ENCODE measurements at regions of chr3 and their contacts with region 1.

Region 1: GRCh38 chr3:47324278-47324865 is 41.6 kb downstream of the KLHL18 start:
- DNase-seq: peak; percentile 63
- ATAC-seq: peak; percentile 95
- H3K4me3 ChIP-seq: no peak overlapping the region
- H3K27ac ChIP-seq: no peak overlapping the region
- H3K4me1 ChIP-seq: no peaks in the 10 kb centered on the region
- H3K27me3 ChIP-seq: no peaks in the 10 kb centered on the region
- CTCF ChIP-seq: peak; percentile 82
- EP300 ChIP-seq: no peak
- POLR2A ChIP-seq: no peak
- RAD21 ChIP-seq: peak; percentile 73

Region 2: DNA sequence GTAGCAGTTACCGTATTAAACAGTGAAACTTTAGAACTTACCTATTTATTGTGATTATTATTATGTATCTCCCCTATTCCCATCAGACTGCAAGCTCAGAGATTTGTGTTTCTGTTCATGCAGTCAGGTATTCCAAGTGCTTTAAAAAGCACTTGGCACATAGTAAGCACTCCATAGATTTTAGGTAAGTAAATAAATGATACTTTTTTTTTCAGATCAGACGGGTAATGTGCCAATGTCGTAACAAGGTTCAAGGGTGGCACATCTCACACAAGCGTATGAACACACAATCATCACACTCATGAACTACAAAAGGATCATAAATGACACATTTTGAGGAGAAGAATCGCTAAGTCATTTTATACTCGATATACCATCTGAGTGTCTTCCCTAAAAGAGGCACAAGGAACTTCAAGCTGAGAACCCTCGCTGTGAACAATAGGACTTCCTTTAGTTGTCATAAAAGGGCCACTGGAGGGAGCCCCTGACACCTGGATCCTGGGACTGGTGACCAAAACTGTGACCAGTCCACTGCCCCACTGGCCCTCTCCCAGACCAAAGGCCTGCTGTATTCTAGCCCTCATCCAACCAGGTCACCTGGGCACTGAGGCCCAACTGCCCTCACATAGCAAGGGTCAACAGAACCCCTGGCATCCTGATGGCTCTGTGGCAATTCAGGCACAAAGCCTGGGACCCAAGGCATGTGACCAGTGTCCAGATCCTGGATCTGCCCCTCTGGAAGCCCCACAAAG is 73.9 kb before region 1 on chr3:
- CTCF ChIA-PET with region 1: interaction called, 14 read pairs
- POLR2A ChIA-PET with region 1: no interaction called
- in situ Hi-C with region 1: loop called (anchors 5 kb)
- intact Hi-C with region 1: loop called (anchors 1 kb)
- DNase-seq: peak; percentile 60
- ATAC-seq: peak; percentile 85
- H3K4me3 ChIP-seq: no peak overlapping the region; a peak in 1 of 6 replicates
- H3K27ac ChIP-seq: no peak overlapping the region
- H3K4me1 ChIP-seq: peaks cover 22% of the 10 kb centered on the region
- H3K27me3 ChIP-seq: no peaks in the 10 kb centered on the region; a peak in 1 of 5 replicates
- CTCF ChIP-seq: peak; percentile 82
- EP300 ChIP-seq: no peak
- POLR2A ChIP-seq: no peak
- RAD21 ChIP-seq: peak; percentile 65; the same call in 1 of the 2 replicates

Region 3: GRCh38 chr3:47282424-47283192 is 41.8 kb before region 1 on chr3 and contains the starts of genes KIF9 and KLHL18:
- CTCF ChIA-PET with region 1: interaction called, 12 read pairs
- POLR2A ChIA-PET with region 1: interaction called, 3 read pairs
- in situ Hi-C with region 1: loop called (anchors 5 kb)
- intact Hi-C with region 1: loop called (anchors 1 kb)
- DNase-seq: peak; percentile 92
- ATAC-seq: peak; percentile 91
- H3K4me3 ChIP-seq: peak within 1 kb of the TSS; percentile 74 to 89 (median 86)
- H3K27ac ChIP-seq: peak within 1 kb of the TSS; percentile 86
- H3K4me1 ChIP-seq: peaks cover 44% of the 10 kb centered on the region
- H3K27me3 ChIP-seq: no peaks in the 10 kb centered on the region; a peak in 1 of 5 replicates
- CTCF ChIP-seq: peak; percentile 47
- EP300 ChIP-seq: peak in 1 of 2 experiments; percentile 24; a peak in 2 of 4 replicates
- POLR2A ChIP-seq: peak; percentile 37 to 77
- RAD21 ChIP-seq: peak; percentile 11; the same call in 1 of the 2 replicates
- total RNA-seq, gene KIF9: 16.9 and 18.8 TPM in 2 replicates
- total RNA-seq, gene KLHL18: 18.8 and 26.1 TPM in 2 replicates

Region 4: DNA sequence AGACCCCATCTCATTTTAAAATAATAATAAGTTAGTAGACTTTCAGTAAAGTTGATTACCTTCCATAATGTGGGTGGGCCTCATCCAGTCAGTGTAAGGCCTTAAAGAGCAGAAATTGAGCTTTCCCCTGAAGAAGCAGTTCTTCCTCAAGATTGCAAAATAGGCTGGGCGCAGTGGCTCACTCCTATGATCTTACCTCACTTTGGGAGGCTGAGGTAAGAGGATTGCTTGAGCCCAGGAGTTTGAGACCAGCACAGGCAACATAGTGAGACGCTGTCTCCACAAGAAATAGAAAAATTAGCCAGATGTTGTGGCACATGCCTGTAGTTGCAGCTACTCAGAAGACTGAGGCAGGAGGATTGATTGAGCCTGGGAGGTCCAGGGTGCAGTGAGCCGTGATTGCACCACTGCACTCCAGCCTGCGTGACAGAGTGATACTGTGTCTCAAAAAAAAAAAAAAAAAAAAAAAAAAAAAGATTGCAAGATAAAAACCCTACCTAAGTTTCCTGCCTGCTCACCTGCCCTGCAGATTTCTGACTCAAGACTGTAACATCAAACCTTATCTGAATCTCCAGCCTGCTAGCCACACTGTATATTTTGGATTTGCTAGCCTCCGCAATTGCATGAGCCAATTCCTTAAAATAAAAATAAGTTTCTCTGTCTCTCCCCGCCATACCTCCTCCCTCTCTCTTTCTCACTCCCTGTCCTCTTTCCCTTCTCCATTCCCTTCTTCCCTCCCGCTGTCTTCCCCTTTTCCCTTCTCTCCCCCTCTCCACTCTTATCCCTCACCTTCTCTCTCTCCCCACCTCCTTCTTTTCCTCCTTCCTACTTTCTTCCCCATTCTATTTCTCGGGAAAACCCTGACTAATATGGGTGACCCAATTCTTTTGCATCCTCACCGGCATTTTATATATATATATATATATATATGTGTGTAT is 24.7 kb before region 1 on chr3:
- CTCF ChIA-PET with region 1: no interaction called
- POLR2A ChIA-PET with region 1: no interaction called
- in situ Hi-C with region 1: no loop called
- intact Hi-C with region 1: loop called (anchors 2 kb)
- DNase-seq: peak; percentile 20
- ATAC-seq: peak; percentile 72
- H3K4me3 ChIP-seq: no peak overlapping the region
- H3K27ac ChIP-seq: peak overlapping the region; percentile 35
- H3K4me1 ChIP-seq: peaks cover 53% of the 10 kb centered on the region
- H3K27me3 ChIP-seq: no peaks in the 10 kb centered on the region
- CTCF ChIP-seq: no peak
- EP300 ChIP-seq: no peak
- POLR2A ChIP-seq: no peak
- RAD21 ChIP-seq: no peak